ENCODE measurements at regions of chr6 and their contacts with region 1.

Region 1: GRCh38 chr6:14200047-14200446 is 82.5 kb downstream of the CD83 start:
- DNase-seq: no peak
- H3K4me3 ChIP-seq: no peak overlapping the region
- H3K27ac ChIP-seq: no peak overlapping the region
- H3K4me1 ChIP-seq: no peaks in the 10 kb centered on the region
- H3K27me3 ChIP-seq: no peaks in the 10 kb centered on the region
- CTCF ChIP-seq: no peak

Region 2: GRCh38 chr6:14001329-14002012 is 198.6 kb before region 1 on chr6:
- intact Hi-C with region 1: no loop called
- DNase-seq: no peak
- H3K4me3 ChIP-seq: no peak overlapping the region
- H3K27ac ChIP-seq: no peak overlapping the region
- H3K4me1 ChIP-seq: no peaks in the 10 kb centered on the region
- H3K27me3 ChIP-seq: peaks cover 0 to 2% of the 10 kb centered on the region in 2 donors
- CTCF ChIP-seq: no peak

Region 3: GRCh38 chr6:14224359-14225103 is 24.5 kb after region 1 on chr6:
- intact Hi-C with region 1: loop called (anchors 2 kb)
- DNase-seq: no peak
- H3K4me3 ChIP-seq: no peak overlapping the region
- H3K27ac ChIP-seq: no peak overlapping the region
- H3K4me1 ChIP-seq: no peaks in the 10 kb centered on the region
- H3K27me3 ChIP-seq: peaks cover 0 to 9% of the 10 kb centered on the region in 2 donors
- CTCF ChIP-seq: no peak